ENCODE measurements at regions of chr3 and their contacts with region 1.

Region 1: GRCh38 chr3:20141851-20142250 is 44.2 kb downstream of the SGO1 start:
- DNase-seq: peak; percentile 29
- H3K4me3 ChIP-seq: no peak overlapping the region
- H3K27ac ChIP-seq: no peak overlapping the region
- H3K4me1 ChIP-seq: no peaks in the 10 kb centered on the region
- H3K27me3 ChIP-seq: no peaks in the 10 kb centered on the region
- CTCF ChIP-seq: no peak

Region 2: GRCh38 chr3:20401253-20401652 is 259.4 kb after region 1 on chr3:
- CTCF ChIA-PET with region 1: no interaction called
- POLR2A ChIA-PET with region 1: no interaction called
- intact Hi-C with region 1: loop called (anchors 5 kb)
- DNase-seq: no peak
- H3K4me3 ChIP-seq: no peak overlapping the region
- H3K27ac ChIP-seq: no peak overlapping the region
- H3K4me1 ChIP-seq: no peaks in the 10 kb centered on the region
- H3K27me3 ChIP-seq: no peaks in the 10 kb centered on the region
- CTCF ChIP-seq: no peak

Measured in A673 (cell line).